ENCODE measurements at regions of chr4 and their contacts with region 1.

Region 1: DNA sequence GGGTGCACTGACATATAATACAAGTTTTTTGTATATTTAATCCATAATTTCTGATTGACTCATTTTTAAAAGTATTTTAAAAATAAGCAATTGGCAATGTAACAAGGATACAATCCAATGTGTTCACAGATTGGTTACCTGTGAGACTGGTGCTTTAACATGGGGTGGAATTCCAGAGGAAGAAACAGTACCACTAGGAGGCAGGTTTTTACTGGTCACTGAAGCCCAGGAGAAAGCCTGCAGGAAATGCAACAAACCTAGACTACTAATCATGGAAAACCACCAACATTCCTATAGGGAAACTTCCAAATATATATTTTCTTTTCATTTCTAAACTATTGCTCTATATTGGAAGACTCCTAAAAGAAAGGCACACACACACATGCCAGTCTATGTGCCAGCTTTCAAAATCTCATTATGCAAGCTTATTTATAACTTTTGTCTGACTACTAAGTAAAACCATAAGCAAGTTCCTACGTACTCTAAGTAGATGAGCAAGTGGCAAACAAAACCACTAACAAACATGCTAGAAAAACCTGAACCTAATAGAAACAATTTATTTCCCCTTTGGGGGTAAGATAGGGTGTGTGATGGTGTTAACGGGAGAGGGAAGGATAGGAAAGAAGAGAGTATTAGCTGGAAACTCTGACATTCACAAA is 19.2 kb downstream of the G3BP2 start:
- DNase-seq: peak in 1 of 7 donors; percentile 9
- H3K4me3 ChIP-seq: no peak overlapping the region
- H3K27ac ChIP-seq: no peak overlapping the region
- H3K4me1 ChIP-seq: no peaks in the 10 kb centered on the region
- H3K27me3 ChIP-seq: no peaks in the 10 kb centered on the region
- CTCF ChIP-seq: peak; percentile 26 to 46 (median 42)
- POLR2A ChIP-seq: no peak

Region 2: DNA sequence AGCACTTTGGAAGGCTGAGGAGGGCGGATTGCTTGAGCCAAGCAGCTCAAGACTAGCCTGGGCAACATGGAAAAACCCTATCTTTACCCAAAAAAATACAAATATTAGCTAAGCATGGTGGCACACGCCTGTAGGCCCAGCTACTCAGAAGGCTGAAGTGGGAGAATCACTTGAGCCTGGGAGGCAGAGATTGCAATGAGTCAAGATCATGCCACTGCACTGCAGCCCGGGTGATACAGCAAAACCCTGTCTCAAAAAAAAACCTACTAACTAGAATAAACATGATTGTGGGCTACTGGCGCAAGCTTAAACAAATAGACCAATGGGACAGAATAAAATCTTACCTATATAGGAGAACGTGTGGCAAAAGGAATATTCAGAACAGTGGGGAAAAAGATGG is 30.9 kb before region 1 on chr4:
- intact Hi-C with region 1: no loop called
- DNase-seq: no peak
- H3K4me3 ChIP-seq: no peak overlapping the region
- H3K27ac ChIP-seq: no peak overlapping the region
- H3K4me1 ChIP-seq: no peaks in the 10 kb centered on the region
- H3K27me3 ChIP-seq: no peaks in the 10 kb centered on the region
- CTCF ChIP-seq: no peak
- POLR2A ChIP-seq: no peak

Region 3: GRCh38 chr4:75769036-75769435 is 115.1 kb after region 1 on chr4:
- intact Hi-C with region 1: no loop called
- DNase-seq: no peak
- H3K4me3 ChIP-seq: no peak overlapping the region
- H3K27ac ChIP-seq: peak overlapping the region in 4 of 5 donors; percentile 15 to 55 (median 46)
- H3K4me1 ChIP-seq: peaks cover 5 to 17% of the 10 kb centered on the region in 2 donors
- H3K27me3 ChIP-seq: no peaks in the 10 kb centered on the region
- CTCF ChIP-seq: no peak
- POLR2A ChIP-seq: no peak

Region 4: DNA sequence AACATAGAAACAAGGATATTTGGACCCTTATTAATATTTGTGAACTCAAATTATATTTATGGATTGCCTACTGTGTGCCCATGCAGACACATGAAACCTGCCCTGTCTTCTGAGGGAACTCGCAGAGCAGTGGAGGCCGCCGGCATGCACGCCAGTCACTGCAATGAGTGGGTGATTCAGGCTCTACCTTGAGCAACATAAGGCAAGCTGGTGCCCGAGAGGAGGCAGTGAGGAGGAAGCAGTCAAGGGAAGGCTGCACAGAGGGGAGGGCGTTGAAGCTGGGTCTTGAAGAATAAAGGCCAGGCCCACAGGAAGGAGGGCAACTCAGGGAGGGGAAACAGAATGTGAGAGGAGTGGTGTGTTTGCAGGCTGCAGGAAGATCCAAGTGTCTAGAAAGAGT is 195.5 kb after region 1 on chr4:
- intact Hi-C with region 1: loop called in 1 of 2 experiments (anchors 5 kb)
- DNase-seq: no peak
- H3K4me3 ChIP-seq: no peak overlapping the region
- H3K27ac ChIP-seq: no peak overlapping the region
- H3K4me1 ChIP-seq: peaks cover 3 to 4% of the 10 kb centered on the region in 2 donors
- H3K27me3 ChIP-seq: no peaks in the 10 kb centered on the region
- CTCF ChIP-seq: no peak
- POLR2A ChIP-seq: no peak